ENCODE measurements at regions of chrX and their contacts with region 1.

Region 1: DNA sequence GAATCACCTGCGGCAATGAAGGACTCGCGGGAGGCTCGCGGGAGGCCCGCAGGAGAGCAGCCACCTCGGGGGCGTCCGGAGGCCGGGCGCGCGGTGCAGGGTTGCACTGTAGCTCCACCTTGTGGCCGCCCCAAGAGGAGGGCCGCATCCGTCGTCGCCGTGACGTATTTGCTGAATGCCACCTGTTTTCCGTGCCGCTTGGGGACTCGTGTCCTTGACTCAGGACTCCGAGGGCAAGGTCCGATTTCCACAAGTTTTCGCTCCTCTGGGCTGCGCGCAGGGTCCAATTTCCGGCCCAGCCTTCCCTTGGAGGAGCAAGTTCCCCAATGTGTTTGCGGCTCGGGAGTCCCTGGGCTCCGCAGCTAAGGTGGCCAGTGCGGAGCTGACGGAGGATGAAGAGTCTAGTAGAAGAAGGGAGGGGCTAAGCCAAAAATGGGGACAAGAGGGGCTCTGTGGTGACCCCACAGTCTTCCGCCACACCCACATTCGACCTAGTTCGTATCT is 10.7 kb upstream of the DLG3 start:
- DNase-seq: peak; percentile 58 to 88 (median 68)
- ATAC-seq: peak; percentile 81
- H3K4me3 ChIP-seq: peak overlapping the region; percentile 65
- H3K4me3 Mint-ChIP-seq: peak overlapping the region; percentile 95
- H3K27ac ChIP-seq: peak overlapping the region; percentile 13 to 51
- H3K27ac Mint-ChIP-seq: peak overlapping the region; percentile 93
- H3K4me1 ChIP-seq: peaks cover 20% of the 10 kb centered on the region
- H3K4me1 Mint-ChIP-seq: peaks cover 19% of the 10 kb centered on the region
- H3K27me3 ChIP-seq: no peaks in the 10 kb centered on the region
- H3K27me3 Mint-ChIP-seq: peaks cover 15% of the 10 kb centered on the region
- CTCF ChIP-seq: peak; percentile 69

Region 2: DNA sequence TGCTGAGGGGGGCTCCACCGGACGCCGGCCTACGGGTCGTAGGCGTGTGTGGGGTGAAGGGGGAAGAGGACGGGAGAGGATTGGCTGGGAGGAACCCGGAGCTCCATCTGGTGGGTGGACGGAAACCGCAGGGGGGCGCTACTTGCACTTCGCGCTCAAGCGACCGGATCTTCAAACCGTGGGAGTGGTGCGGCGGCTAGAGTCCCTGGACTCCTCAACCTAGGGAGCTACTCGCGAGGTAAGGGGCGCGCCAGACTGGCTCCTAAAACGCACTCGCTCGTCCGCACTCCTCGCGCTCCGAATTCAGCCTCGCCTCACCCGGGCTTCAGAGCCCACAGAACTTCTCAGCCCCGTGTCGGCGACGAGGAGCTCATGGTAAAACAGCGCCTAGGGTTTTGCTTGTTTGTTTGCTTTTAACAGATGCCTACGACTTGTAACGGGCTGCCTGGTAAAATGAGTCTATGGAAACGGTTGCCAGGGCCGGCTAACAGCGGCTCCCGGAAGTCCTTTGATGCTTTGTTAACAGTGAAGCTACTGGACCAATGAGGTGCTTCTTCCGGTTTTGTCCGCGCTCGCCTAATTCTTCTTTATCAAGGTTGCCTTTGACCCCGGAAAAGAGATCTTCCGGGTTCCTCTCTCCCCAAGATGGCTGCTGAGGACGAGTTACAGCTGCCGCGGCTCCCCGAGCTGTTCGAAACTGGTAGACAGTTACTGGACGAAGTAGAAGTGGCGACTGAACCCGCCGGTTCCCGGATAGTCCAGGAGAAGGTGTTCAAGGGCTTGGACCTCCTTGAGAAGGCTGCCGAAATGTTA is 300.4 kb before region 1 on chrX and contains the start of gene IGBP1:
- CTCF ChIA-PET with region 1: no interaction called
- POLR2A ChIA-PET with region 1: interaction called, 9 read pairs
- intact Hi-C with region 1: loop called in 1 of 2 experiments (anchors 10 kb)
- DNase-seq: peak; percentile 54 to 94 (median 67)
- ATAC-seq: peak; percentile 81
- H3K4me3 ChIP-seq: peak within 1 kb of the TSS; percentile 77
- H3K4me3 Mint-ChIP-seq: peak within 1 kb of the TSS; percentile 89
- H3K27ac ChIP-seq: peak within 1 kb of the TSS; percentile 79 to 94
- H3K27ac Mint-ChIP-seq: peak within 1 kb of the TSS; percentile 87
- H3K4me1 ChIP-seq: peaks cover 23% of the 10 kb centered on the region
- H3K4me1 Mint-ChIP-seq: peaks cover 37% of the 10 kb centered on the region
- H3K27me3 ChIP-seq: no peaks in the 10 kb centered on the region
- H3K27me3 Mint-ChIP-seq: no peaks in the 10 kb centered on the region
- CTCF ChIP-seq: peak; percentile 51
- total RNA-seq, gene IGBP1: 63.7 to 64.4 TPM

Region 3: GRCh38 chrX:70289793-70290776 is 143.8 kb before region 1 on chrX and contains the starts of genes KIF4A and PDZD11:
- CTCF ChIA-PET with region 1: no interaction called
- POLR2A ChIA-PET with region 1: interaction called, 3 read pairs
- intact Hi-C with region 1: loop called (anchors 5 to 10 kb)
- DNase-seq: peak; percentile 45 to 87 (median 65)
- ATAC-seq: peak; percentile 96
- H3K4me3 ChIP-seq: peak within 1 kb of the TSS; percentile 76
- H3K4me3 Mint-ChIP-seq: peak within 1 kb of the TSS; percentile 86
- H3K27ac ChIP-seq: peak within 1 kb of the TSS in 1 of 2 donors; percentile 62
- H3K27ac Mint-ChIP-seq: peak within 1 kb of the TSS; percentile 81
- H3K4me1 ChIP-seq: peaks cover 13% of the 10 kb centered on the region
- H3K4me1 Mint-ChIP-seq: peaks cover 18% of the 10 kb centered on the region
- H3K27me3 ChIP-seq: no peaks in the 10 kb centered on the region
- H3K27me3 Mint-ChIP-seq: no peaks in the 10 kb centered on the region
- CTCF ChIP-seq: no peak
- total RNA-seq, gene KIF4A: 0.06 to 0.19 TPM
- total RNA-seq, gene PDZD11: 6.1 to 7.8 TPM

Region 4: GRCh38 chrX:70336767-70337166 is 97.1 kb before region 1 on chrX:
- CTCF ChIA-PET with region 1: no interaction called
- POLR2A ChIA-PET with region 1: no interaction called
- intact Hi-C with region 1: loop called in 1 of 2 experiments (anchors 5 kb)
- DNase-seq: peak in 1 of 14 experiments; percentile 1
- ATAC-seq: no peak
- H3K4me3 ChIP-seq: no peak overlapping the region
- H3K4me3 Mint-ChIP-seq: no peak overlapping the region
- H3K27ac ChIP-seq: no peak overlapping the region
- H3K27ac Mint-ChIP-seq: no peak overlapping the region
- H3K4me1 ChIP-seq: no peaks in the 10 kb centered on the region
- H3K4me1 Mint-ChIP-seq: no peaks in the 10 kb centered on the region
- H3K27me3 ChIP-seq: no peaks in the 10 kb centered on the region
- H3K27me3 Mint-ChIP-seq: no peaks in the 10 kb centered on the region
- CTCF ChIP-seq: no peak

Region 5: GRCh38 chrX:70454441-70455365 is 20.8 kb after region 1 on chrX:
- CTCF ChIA-PET with region 1: interaction called, 6 read pairs
- POLR2A ChIA-PET with region 1: no interaction called
- intact Hi-C with region 1: loop called in 1 of 2 experiments (anchors 2 kb)
- DNase-seq: peak in 13 of 14 experiments; percentile 38 to 89 (median 62)
- ATAC-seq: peak; percentile 74
- H3K4me3 ChIP-seq: peak overlapping the region; percentile 67
- H3K4me3 Mint-ChIP-seq: peak overlapping the region; percentile 87
- H3K27ac ChIP-seq: peak overlapping the region; percentile 17 to 61
- H3K27ac Mint-ChIP-seq: peak overlapping the region; percentile 86
- H3K4me1 ChIP-seq: peaks cover 40% of the 10 kb centered on the region
- H3K4me1 Mint-ChIP-seq: peaks cover 41% of the 10 kb centered on the region
- H3K27me3 ChIP-seq: no peaks in the 10 kb centered on the region
- H3K27me3 Mint-ChIP-seq: no peaks in the 10 kb centered on the region
- CTCF ChIP-seq: peak; percentile 69